ENCODE measurements at regions of chr4 and their contacts with region 1.

Region 1: DNA sequence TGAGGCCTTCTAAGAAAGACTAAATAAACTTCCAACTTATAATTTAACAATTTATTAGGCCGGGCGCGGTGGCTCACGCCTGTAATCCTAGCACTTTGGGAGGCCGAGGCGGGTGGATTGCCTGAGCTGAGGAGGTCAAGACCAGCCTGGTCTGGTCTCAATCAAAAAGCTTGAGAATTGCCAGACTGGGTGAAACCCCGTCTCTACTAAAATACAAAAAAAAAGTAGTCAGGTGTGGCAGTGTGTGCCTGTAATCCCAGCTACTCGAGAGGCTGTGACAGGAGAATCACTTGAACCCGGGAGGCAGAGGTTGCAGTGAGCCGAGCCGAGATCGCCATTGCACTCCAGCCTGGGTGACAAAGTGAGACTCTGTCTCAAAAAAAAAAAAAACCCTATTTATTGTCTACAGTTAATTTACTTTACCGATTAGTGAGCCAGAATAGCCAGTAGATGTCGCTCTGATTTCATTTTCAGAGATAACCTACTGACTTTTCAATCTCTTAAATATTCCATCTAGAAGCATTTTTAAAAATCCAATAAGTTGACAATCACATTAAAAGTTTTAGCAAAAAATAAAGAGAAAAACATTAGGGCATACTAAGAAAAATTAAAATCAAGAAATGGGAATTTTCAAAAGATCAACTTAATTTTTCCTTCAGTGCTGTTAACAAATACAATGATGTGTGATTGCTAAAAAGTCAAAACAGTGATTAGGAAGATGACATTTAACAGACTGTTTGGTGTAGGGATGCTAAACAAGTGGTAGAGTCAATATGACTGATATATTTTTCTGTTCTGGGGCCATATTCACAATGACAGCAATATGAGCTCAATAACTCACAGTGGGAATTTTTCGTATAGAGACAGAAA is 4.3 kb upstream of the SHROOM3 start:
- DNase-seq: no peak
- H3K4me3 Mint-ChIP-seq: no peak overlapping the region
- H3K27ac Mint-ChIP-seq: no peak overlapping the region
- H3K4me1 Mint-ChIP-seq: no peaks in the 10 kb centered on the region
- H3K27me3 Mint-ChIP-seq: peaks cover 23% of the 10 kb centered on the region

Region 2: DNA sequence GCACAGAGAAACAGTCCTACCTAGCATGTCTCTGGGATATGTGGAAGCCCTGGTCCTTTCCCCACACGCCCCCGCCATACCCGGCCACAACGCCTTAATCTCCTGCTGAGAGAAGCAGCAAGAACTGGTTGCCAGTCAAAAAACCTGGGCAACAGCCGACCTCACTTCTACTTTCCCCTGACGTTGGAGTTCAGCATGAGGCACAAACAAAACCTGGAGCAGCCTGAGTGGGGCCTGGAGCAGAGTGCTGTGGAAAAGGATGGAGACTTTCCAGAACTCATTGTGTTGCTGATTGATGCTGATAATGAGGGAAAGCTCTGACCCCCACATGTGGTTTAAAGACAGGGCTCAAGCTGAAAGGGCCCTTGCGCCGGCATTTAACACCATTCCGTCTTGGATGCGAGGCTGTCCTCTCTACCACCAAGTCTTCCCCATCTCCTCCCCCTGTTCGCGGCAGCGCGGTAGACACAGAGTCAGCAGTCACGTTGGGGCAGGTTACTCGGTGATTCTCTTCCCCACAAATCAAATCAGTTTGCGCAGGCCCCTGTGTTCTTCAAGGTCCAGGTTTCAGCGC is 10.5 kb before region 1 on chr4:
- intact Hi-C with region 1: no loop called
- DNase-seq: no peak
- H3K4me3 Mint-ChIP-seq: no peak overlapping the region
- H3K27ac Mint-ChIP-seq: no peak overlapping the region
- H3K4me1 Mint-ChIP-seq: no peaks in the 10 kb centered on the region
- H3K27me3 Mint-ChIP-seq: peaks cover 18% of the 10 kb centered on the region

Region 3: DNA sequence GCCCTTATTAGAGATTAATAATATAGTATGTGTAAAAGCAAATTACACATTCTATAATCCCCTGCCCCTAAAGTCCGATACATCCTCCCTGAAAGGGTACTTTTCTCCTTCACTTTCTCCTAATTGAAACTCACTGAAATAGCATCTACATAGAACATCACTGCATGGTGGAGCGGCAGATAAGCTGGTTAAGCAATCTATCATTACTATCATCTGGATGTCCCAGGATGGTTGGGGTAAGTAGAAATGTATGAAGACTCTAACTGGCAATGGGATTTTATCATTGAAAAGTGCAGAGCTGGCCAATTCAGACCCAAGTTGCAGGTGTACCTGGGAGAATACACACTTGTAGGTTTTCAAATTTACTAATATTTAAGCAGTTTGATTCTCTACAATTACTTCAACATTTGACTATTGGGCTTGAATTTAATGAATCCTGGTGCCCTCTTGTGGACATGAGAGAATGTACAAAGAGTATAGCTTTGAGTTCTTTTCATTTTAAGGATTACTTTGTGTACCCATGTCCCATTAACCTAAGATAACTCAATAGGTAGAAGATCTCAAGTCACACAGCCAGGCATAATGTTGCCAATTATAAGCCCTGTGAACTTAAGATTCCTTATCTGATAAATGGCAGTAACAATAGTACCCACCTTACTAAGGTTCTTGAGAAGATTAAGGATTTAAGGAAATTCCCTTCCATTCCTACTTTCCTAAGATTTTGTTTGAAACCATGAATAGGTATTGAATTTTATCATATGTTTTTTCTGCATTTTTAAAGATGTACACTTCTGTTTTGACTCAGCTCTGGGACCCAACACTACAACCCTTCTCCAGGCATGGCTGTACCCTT is 74.1 kb after region 1 on chr4:
- intact Hi-C with region 1: loop called (anchors 1 kb)
- DNase-seq: no peak
- H3K4me3 Mint-ChIP-seq: no peak overlapping the region
- H3K27ac Mint-ChIP-seq: no peak overlapping the region
- H3K4me1 Mint-ChIP-seq: no peaks in the 10 kb centered on the region
- H3K27me3 Mint-ChIP-seq: no peaks in the 10 kb centered on the region

Region 4: GRCh38 chr4:76758290-76758882 is 327.6 kb after region 1 on chr4:
- intact Hi-C with region 1: loop called (anchors 1 kb)
- DNase-seq: no peak
- H3K4me3 Mint-ChIP-seq: no peak overlapping the region
- H3K27ac Mint-ChIP-seq: no peak overlapping the region
- H3K4me1 Mint-ChIP-seq: peaks cover 12% of the 10 kb centered on the region
- H3K27me3 Mint-ChIP-seq: peaks cover 3% of the 10 kb centered on the region

Region 5: DNA sequence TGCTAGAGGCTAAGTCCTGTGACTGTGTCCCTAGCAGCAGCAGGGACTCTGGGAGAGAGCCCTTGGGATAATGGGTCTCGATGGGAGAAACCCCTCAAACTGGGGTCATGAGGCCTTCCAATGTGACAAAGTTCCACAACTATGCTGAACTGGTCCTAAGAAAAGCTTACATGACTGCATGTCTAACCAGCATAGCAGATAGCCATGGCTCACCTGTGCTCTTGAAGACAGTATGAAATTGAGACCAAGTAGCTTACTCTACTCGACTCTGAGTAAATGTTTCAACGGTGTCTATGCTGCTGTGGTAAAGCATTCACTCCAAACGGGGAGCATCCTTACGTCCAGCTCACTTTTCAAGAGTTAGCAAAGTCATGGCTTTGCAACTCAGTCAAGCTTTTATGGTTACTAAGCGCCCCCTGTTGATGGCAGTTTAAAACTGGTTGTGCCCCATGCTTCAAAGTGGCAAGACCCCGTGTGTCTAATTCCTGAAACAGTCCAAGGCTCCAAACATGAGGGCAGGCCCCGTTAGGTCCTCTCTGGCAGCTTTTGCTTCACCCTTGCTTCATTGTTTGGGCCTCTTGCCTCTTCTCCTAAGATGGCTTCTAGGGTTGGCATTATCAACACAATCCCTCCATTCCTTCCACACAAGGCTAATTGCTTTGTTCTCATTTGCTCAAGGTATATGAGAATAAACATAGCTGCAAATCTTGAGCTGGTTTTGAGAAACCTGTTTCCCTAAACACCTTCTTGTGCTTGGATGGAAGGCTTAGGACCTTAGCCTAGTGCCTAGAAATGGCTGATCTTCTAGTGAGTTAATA is 772.8 kb after region 1 on chr4:
- intact Hi-C with region 1: loop called (anchors 1 kb)
- DNase-seq: peak; percentile 47
- H3K4me3 Mint-ChIP-seq: no peak overlapping the region
- H3K27ac Mint-ChIP-seq: no peak overlapping the region
- H3K4me1 Mint-ChIP-seq: peaks cover 13% of the 10 kb centered on the region
- H3K27me3 Mint-ChIP-seq: peaks cover 15% of the 10 kb centered on the region

Region 6: GRCh38 chr4:77358315-77358928 is 927.7 kb after region 1 on chr4:
- intact Hi-C with region 1: loop called (anchors 1 kb)
- DNase-seq: no peak
- H3K4me3 Mint-ChIP-seq: no peak overlapping the region
- H3K27ac Mint-ChIP-seq: no peak overlapping the region
- H3K4me1 Mint-ChIP-seq: no peaks in the 10 kb centered on the region
- H3K27me3 Mint-ChIP-seq: no peaks in the 10 kb centered on the region